ENCODE measurements at regions of chr1 and their contacts with region 1.

Region 1: DNA sequence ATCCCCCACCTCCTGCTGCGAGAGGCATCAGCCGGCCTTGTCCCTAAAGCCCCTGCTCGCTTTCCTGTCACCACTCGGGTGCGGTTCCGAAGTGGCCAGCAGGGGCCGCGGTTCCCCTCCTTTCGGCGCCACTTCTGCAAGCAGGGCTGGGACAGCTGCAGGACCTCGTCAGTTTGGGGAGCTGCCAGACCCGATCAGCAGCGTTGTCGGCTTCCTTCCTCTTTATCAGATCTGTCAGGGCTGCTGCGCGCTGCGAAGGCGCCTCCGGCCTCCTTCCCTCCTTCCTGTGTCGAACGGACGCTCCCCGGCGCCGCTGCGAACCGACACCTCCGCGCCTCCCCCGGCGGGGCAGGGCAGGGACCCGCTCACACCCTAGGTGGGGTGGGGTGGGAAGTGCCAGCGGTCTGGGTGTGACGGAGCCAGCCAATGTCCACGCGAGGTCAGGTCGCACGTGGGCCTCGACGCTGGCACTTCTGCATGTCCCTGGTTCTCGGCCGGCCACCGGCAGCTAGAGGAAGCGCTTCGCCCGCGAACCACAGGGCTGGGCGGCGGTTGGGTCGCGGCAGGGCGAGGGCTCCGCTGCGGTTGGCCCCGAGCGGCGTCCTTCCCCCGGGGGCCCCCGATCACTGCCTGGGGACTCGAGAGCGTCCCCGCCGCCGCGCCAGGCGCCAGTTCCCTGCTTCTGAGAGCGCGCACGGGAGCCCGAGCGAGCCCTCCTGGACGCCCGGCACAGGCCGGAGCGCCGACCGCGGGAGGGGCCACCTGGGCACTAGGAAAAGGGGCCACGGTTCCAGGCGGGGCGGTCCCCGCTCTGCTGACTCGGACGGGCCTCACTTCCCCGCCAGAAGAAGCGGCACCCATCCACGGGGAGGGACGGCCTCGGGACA is 81.8 kb downstream of the RUNX3 start:
- DNase-seq: peak; percentile 89
- H3K4me3 Mint-ChIP-seq: peak overlapping the region; percentile 66
- H3K27ac Mint-ChIP-seq: no peak overlapping the region
- H3K4me1 Mint-ChIP-seq: no peaks in the 10 kb centered on the region
- H3K27me3 Mint-ChIP-seq: no peaks in the 10 kb centered on the region
- CTCF ChIP-seq: peak; percentile 66

Region 2: DNA sequence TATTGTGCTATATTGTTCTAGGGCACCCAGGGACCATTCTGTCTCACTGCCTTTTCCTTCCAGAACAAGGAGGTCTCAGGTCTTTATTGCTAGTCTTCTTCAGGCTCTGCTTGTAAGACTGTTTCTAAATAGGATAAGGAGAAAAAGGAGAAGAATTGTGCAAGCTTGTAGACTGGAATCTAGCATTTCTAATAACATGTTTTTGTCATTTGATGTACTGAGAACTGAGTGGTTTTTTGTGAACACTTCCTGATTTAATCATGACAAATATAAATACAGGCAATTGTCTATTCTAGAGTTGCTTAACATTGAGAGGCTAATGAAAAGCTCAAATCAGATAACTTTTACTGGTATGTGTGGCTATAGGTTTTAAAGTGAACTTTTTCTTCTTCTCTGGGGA is 25.4 kb before region 1 on chr1:
- CTCF ChIA-PET with region 1: no interaction called
- intact Hi-C with region 1: no loop called
- DNase-seq: no peak
- H3K4me3 Mint-ChIP-seq: no peak overlapping the region
- H3K27ac Mint-ChIP-seq: no peak overlapping the region
- H3K4me1 Mint-ChIP-seq: no peaks in the 10 kb centered on the region
- H3K27me3 Mint-ChIP-seq: no peaks in the 10 kb centered on the region
- CTCF ChIP-seq: no peak

Region 3: GRCh38 chr1:25204797-25205480 is 356.7 kb after region 1 on chr1:
- CTCF ChIA-PET with region 1: interaction called, 5 read pairs
- intact Hi-C with region 1: loop called (anchors 5 kb)
- DNase-seq: no peak
- H3K4me3 Mint-ChIP-seq: no peak overlapping the region
- H3K27ac Mint-ChIP-seq: no peak overlapping the region
- H3K4me1 Mint-ChIP-seq: no peaks in the 10 kb centered on the region
- H3K27me3 Mint-ChIP-seq: peaks cover 38% of the 10 kb centered on the region
- CTCF ChIP-seq: no peak